ENCODE measurements at regions of chr2 and their contacts with region 1.

Region 1: DNA sequence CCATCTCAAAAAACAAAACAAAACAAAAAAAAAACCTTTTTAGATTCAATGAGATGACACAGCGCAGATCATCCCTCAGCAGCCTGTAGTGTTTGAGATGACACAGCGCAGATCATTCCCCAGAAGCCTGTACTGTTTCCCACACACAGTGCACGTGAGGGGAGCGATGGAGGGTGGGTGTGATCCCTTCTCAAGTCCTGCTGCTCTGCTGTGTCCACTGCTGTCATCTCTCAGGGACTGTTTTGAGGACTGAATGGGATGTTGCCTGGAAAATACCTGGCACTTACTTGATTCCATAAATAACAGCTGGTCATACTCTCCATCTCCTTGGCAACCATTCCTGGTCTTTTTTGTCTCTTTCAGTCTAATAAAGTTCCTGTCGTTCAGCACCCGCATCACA is 25.7 kb downstream of the TGOLN2 start:
- DNase-seq: no peak
- H3K4me3 ChIP-seq: no peak overlapping the region
- H3K4me3 Mint-ChIP-seq: no peak overlapping the region
- H3K27ac ChIP-seq: no peak overlapping the region
- H3K27ac Mint-ChIP-seq: no peak overlapping the region
- H3K4me1 ChIP-seq: peaks cover 12% of the 10 kb centered on the region in 2 donors
- H3K4me1 Mint-ChIP-seq: peaks cover 10% of the 10 kb centered on the region
- H3K27me3 ChIP-seq: no peaks in the 10 kb centered on the region
- H3K27me3 Mint-ChIP-seq: peaks cover 7 to 13% (median 8%) of the 10 kb centered on the region in 3 donors
- CTCF ChIP-seq: no peak

Region 2: GRCh38 chr2:85017411-85018048 is 284.6 kb before region 1 on chr2:
- intact Hi-C with region 1: no loop called
- DNase-seq: no peak
- H3K4me3 ChIP-seq: no peak overlapping the region
- H3K4me3 Mint-ChIP-seq: no peak overlapping the region
- H3K27ac ChIP-seq: no peak overlapping the region
- H3K27ac Mint-ChIP-seq: peak overlapping the region in 3 of 7 donors; percentile 48 to 78 (median 54)
- H3K4me1 ChIP-seq: peaks cover 34 to 43% of the 10 kb centered on the region in 2 donors
- H3K4me1 Mint-ChIP-seq: peaks cover 49% of the 10 kb centered on the region
- H3K27me3 ChIP-seq: no peaks in the 10 kb centered on the region
- H3K27me3 Mint-ChIP-seq: no peaks in the 10 kb centered on the region
- CTCF ChIP-seq: peak; percentile 58

Region 3: DNA sequence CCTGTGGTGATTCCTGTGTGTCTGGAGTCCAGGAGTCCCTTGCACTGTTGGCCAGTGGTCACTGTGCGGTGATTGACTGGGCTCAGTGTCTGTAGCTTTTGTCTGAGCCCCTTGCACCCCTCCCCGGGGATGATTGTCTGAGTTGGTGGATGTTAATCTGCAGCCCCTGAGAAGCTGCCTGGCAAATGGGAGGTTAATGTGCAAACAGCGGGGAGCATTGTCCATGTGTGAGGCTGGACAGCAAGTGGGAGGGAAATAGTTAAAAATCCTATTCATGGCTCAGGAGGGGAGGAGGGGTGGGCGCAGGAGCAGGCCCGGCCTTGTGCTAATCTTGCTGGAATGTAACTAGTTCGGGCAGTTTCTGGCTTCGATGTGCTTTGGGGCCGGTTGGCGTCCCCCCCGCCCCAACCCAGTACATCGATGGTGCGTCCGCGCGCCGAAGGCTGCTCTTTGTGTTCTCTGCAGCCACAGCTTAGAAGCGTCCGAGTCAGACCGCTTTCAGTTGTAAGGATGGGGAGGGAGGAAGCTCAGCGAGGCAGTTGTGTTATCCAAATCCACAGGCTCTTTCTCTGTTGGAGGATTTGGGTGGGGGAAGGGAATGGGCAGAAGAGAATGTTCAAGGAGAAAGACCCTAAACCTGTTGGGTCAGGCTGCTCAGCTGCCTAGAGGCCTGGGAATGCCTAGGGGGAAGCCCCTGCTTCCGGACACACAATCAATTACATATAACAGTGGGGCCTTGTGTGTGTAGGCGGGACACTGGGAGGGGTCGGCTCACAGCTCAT is 46.1 kb before region 1 on chr2:
- intact Hi-C with region 1: no loop called
- DNase-seq: no peak
- H3K4me3 ChIP-seq: no peak overlapping the region
- H3K4me3 Mint-ChIP-seq: no peak overlapping the region
- H3K27ac ChIP-seq: no peak overlapping the region
- H3K27ac Mint-ChIP-seq: peak overlapping the region in 1 of 7 donors; percentile 80
- H3K4me1 ChIP-seq: no peaks in the 10 kb centered on the region
- H3K4me1 Mint-ChIP-seq: no peaks in the 10 kb centered on the region
- H3K27me3 ChIP-seq: no peaks in the 10 kb centered on the region
- H3K27me3 Mint-ChIP-seq: peaks cover 0 to 3% (median 0%) of the 10 kb centered on the region in 3 donors
- CTCF ChIP-seq: no peak

Region 4: GRCh38 chr2:85266146-85267041 is 35.7 kb before region 1 on chr2:
- intact Hi-C with region 1: loop called (anchors 2 to 5 kb)
- DNase-seq: peak; percentile 54 to 72 (median 70)
- H3K4me3 ChIP-seq: no peak overlapping the region
- H3K4me3 Mint-ChIP-seq: no peak overlapping the region
- H3K27ac ChIP-seq: no peak overlapping the region
- H3K27ac Mint-ChIP-seq: peak overlapping the region in 1 of 7 donors; percentile 9
- H3K4me1 ChIP-seq: no peaks in the 10 kb centered on the region
- H3K4me1 Mint-ChIP-seq: no peaks in the 10 kb centered on the region
- H3K27me3 ChIP-seq: no peaks in the 10 kb centered on the region
- H3K27me3 Mint-ChIP-seq: peaks cover 3 to 14% (median 11%) of the 10 kb centered on the region in 3 donors
- CTCF ChIP-seq: peak; percentile 98

Region 5: DNA sequence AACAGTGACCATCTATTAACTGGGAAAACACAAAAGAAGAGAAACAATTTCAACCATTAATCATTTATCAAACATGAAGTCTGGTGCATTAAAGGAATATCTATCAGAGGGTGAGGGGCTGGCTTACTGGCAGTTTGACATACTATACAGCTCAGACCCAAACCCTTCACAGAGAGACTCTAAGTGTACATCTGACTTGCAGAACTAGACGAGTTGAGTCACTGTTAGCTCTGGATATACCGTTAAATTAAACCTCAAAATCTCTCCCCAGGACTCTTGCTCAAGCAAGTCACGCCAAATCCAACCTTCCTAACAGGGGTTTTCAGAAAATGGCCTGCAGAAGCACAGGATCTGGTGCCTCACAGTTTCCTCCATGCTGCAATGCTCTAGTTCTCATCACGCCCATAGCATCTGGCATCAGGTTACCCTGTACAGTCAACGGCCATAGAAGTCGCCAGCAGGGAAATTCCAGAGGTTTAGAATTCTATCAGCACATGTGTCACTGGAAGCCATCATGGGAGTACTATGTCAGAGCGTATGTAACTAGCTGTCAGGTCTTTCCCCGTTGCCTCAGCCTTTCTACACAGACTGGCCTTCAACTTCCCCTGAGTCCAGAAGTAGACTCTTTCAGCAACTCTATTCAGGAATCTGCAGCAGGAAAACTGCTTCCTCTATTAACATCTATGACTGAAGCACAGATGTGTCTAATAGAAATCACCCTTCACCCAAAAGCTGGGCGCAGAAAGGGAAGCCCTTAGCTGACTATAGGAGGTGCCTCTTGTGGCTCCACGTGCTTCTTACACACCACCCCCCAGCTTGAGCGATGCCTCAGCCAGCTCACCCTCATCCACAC is 16.3 kb after region 1 on chr2:
- intact Hi-C with region 1: no loop called
- DNase-seq: peak; percentile 60 to 85 (median 67)
- H3K4me3 ChIP-seq: no peak overlapping the region
- H3K4me3 Mint-ChIP-seq: no peak overlapping the region
- H3K27ac ChIP-seq: peak overlapping the region; percentile 30 to 71
- H3K27ac Mint-ChIP-seq: peak overlapping the region; percentile 58 to 90 (median 80)
- H3K4me1 ChIP-seq: peaks cover 48 to 55% of the 10 kb centered on the region in 2 donors
- H3K4me1 Mint-ChIP-seq: peaks cover 56% of the 10 kb centered on the region
- H3K27me3 ChIP-seq: no peaks in the 10 kb centered on the region
- H3K27me3 Mint-ChIP-seq: peaks cover 0 to 3% (median 0%) of the 10 kb centered on the region in 3 donors
- CTCF ChIP-seq: no peak

Region 6: DNA sequence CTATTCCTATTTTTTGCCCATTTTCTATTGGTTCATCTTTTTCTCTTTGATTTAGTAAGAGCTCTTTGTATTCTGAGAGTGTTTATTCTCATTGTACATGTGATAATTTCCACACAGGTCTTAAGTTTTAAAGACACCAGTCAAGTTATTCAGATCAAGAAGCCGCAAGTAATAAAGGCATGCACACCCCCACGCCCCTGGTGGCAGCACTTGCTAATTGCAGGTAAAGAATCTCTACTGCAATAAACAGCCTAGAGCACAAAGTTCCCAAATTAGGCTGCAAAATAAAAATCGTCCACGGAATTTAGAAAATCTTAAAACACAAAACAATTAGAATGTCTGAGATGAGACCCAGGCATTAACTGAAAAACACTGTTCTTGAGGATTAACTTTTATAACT is 541.4 kb after region 1 on chr2:
- intact Hi-C with region 1: no loop called
- DNase-seq: no peak
- H3K4me3 ChIP-seq: no peak overlapping the region
- H3K4me3 Mint-ChIP-seq: no peak overlapping the region
- H3K27ac ChIP-seq: no peak overlapping the region
- H3K27ac Mint-ChIP-seq: no peak overlapping the region
- H3K4me1 ChIP-seq: no peaks in the 10 kb centered on the region
- H3K4me1 Mint-ChIP-seq: peaks cover 10% of the 10 kb centered on the region
- H3K27me3 ChIP-seq: no peaks in the 10 kb centered on the region
- H3K27me3 Mint-ChIP-seq: peaks cover 0 to 3% (median 0%) of the 10 kb centered on the region in 3 donors
- CTCF ChIP-seq: peak; percentile 55

Measured in CD14-positive monocyte (primary cell).